ENCODE measurements at regions of chr17 and their contacts with region 1.

Region 1: GRCh38 chr17:77528516-77529327 is 388.0 kb downstream of the SEC14L1 start:
- DNase-seq: no peak
- H3K4me3 ChIP-seq: no peak overlapping the region
- H3K27ac ChIP-seq: no peak overlapping the region
- H3K4me1 ChIP-seq: peaks cover 0 to 10% of the 10 kb centered on the region in 2 donors
- H3K27me3 ChIP-seq: no peaks in the 10 kb centered on the region
- CTCF ChIP-seq: no peak
- POLR2A ChIP-seq: no peak

Region 2: DNA sequence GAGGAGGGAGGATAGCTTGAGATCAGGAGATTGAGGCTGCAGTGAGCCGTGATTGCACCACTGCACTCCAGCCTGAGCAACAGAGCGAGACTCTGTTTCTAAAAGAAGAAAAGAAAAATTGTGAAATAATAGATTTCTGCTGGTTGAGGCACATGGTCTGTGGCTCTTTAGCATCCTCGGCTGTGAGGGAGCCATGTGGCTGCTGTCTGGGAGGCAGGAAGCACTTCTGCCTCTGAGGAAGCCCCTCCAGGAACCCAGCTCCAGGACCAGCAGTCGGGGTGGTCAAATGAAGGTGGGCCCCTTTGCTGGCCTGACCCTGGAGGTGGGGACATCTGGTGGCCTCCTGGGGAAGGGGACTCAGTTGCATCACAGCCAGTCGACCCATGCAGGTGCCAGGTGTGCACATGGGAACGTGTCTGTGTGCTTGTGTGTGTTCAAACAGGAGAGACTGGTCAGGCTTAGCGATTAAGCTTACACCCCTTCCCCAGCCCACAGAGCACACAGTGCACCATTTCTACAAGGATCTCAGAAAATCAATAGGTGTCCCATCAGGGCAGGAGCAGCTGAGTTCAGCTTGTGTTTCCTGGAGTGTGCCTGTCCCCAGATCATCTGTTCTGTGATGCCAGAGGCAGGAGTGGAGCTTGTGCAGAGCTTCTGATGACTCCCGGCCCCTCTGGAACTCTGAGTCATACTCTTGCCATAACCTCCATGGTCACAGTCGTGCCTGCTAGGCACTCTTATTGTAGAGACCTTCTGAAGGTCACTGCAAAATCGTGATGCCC is 684.8 kb before region 1 on chr17:
- intact Hi-C with region 1: no loop called
- DNase-seq: no peak
- H3K4me3 ChIP-seq: no peak overlapping the region
- H3K27ac ChIP-seq: no peak overlapping the region
- H3K4me1 ChIP-seq: no peaks in the 10 kb centered on the region
- H3K27me3 ChIP-seq: peaks cover 0 to 5% of the 10 kb centered on the region in 2 donors
- CTCF ChIP-seq: no peak
- POLR2A ChIP-seq: no peak

Region 3: GRCh38 chr17:77476931-77477877 is 51.5 kb before region 1 on chr17:
- intact Hi-C with region 1: no loop called
- DNase-seq: peak; percentile 84 to 92
- H3K4me3 ChIP-seq: no peak overlapping the region
- H3K27ac ChIP-seq: peak overlapping the region; percentile 82 to 93
- H3K4me1 ChIP-seq: peaks cover 23 to 74% of the 10 kb centered on the region in 2 donors
- H3K27me3 ChIP-seq: no peaks in the 10 kb centered on the region
- CTCF ChIP-seq: peak in 1 of 4 experiments; percentile 39
- POLR2A ChIP-seq: peak in 1 of 2 donors; percentile 35

Region 4: GRCh38 chr17:77571155-77571981 is 42.6 kb after region 1 on chr17:
- intact Hi-C with region 1: loop called (anchors 10 kb)
- DNase-seq: peak in 1 of 2 donors; percentile 33
- H3K4me3 ChIP-seq: no peak overlapping the region
- H3K27ac ChIP-seq: no peak overlapping the region
- H3K4me1 ChIP-seq: no peaks in the 10 kb centered on the region
- H3K27me3 ChIP-seq: no peaks in the 10 kb centered on the region
- CTCF ChIP-seq: no peak
- POLR2A ChIP-seq: no peak

Region 5: GRCh38 chr17:77602062-77602746 is 73.5 kb after region 1 on chr17:
- intact Hi-C with region 1: no loop called
- DNase-seq: peak; percentile 61 to 63
- H3K4me3 ChIP-seq: no peak overlapping the region
- H3K27ac ChIP-seq: peak overlapping the region; percentile 72 to 82
- H3K4me1 ChIP-seq: no peaks in the 10 kb centered on the region
- H3K27me3 ChIP-seq: no peaks in the 10 kb centered on the region
- CTCF ChIP-seq: no peak
- POLR2A ChIP-seq: no peak

Measured in uterus (tissue), 4 donors.